ENCODE measurements at regions of chr9 and their contacts with region 1.

Region 1: DNA sequence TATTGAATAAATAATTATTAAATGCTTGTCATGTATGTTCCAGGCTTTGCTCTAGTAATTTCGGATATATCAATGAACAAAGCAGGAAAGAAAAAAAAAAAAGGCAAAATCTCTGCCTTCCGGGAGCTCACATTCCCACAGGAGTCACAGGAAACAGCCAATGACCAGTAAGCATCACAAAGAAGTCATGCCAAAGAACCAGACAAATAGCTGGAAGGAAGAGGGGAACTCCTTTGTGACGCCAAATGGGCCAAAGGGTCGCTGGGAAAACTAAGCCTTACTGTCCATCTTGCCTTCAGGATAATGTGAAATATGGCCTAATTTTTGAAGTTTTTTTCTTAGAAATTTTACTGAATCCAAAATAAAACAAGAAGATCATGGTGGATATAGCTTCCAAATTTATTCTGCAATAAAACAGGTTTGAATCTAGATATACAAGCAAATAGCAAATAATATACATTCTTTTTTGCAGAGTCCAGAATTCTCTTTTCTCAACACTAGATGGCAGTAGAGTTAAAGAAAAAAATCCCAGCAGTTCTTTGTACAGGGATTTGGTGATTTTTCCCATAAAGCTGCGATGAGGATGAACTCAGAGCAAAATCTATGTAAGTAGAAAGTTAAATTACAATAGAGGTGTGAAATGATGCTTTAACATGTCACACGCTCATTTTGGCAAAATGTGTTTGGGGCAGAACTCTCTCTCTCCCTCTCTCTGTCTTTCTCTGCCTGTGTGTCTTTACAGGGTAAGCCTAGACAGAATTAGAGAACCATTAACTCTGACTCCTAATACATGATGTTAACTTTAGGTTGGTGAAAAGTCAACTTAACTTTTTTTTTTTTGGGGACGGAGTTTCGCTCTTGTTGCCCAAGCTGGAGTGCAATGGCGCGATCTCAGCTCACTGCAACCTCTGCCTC is 60.0 kb upstream of the TUT7 start:
- DNase-seq: no peak
- H3K4me3 ChIP-seq: no peak overlapping the region
- H3K27ac ChIP-seq: no peak overlapping the region
- H3K4me1 ChIP-seq: no peaks in the 10 kb centered on the region
- H3K27me3 ChIP-seq: peaks cover 4% of the 10 kb centered on the region
- CTCF ChIP-seq: peak; percentile 41 to 78 (median 71)
- EP300 ChIP-seq: no peak
- POLR2A ChIP-seq: no peak

Region 2: GRCh38 chr9:87310827-87311523 is 896.8 kb after region 1 on chr9:
- in situ Hi-C with region 1: loop called in 1 of 4 experiments (anchors 10 kb)
- intact Hi-C with region 1: no loop called
- DNase-seq: no peak
- H3K4me3 ChIP-seq: no peak overlapping the region
- H3K27ac ChIP-seq: no peak overlapping the region
- H3K4me1 ChIP-seq: no peaks in the 10 kb centered on the region
- H3K27me3 ChIP-seq: no peaks in the 10 kb centered on the region
- CTCF ChIP-seq: no peak
- EP300 ChIP-seq: no peak
- POLR2A ChIP-seq: no peak

Measured in transverse colon (tissue), 4 donors.